Activated CD4-positive, alpha-beta T cell treated with anti-CD3 and anti-CD28 coated beads for 36 hours (primary cell): ENCODE measurements at regions of chr18 and their contacts with region 1.

Region 1: DNA sequence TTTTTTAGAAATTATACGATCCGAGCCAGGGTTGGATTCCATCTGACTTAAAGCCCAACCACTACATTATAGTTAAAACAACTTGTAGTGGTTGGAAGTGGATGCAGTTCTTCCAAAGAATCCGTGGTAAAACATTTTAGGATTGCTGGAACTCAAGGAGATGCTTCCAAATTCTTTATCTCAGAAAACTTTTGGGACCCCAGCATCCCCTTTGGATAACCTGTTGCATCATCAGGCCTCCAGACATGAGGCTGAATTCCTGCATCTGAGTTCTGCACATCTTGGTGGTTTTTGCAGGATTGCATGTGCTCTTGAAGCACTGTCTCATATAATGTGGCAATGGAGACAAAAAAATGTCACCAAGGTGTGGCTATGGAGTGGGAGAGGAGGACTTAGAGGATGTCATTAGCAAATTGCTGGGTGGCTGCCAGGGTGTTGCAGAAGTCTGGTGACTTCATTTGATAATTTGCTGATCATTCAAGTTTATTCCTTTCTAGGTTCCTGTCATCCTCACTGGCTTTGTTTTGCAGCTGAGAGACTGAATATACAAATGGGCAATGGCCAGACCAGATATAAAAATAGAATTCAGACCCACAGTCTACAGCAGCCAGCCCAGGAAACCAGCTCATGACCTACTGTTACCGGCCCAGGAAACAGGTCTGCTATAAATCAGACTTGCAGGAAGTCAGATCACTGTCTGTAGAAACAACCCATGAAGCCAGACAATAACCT is 207.7 kb downstream of the BCL2 start:
- DNase-seq: no peak
- ATAC-seq: no peak
- H3K4me3 Mint-ChIP-seq: no peak overlapping the region
- H3K27ac Mint-ChIP-seq: no peak overlapping the region
- H3K4me1 Mint-ChIP-seq: peaks cover 15% of the 10 kb centered on the region
- H3K27me3 Mint-ChIP-seq: peaks cover 7% of the 10 kb centered on the region

Region 2: DNA sequence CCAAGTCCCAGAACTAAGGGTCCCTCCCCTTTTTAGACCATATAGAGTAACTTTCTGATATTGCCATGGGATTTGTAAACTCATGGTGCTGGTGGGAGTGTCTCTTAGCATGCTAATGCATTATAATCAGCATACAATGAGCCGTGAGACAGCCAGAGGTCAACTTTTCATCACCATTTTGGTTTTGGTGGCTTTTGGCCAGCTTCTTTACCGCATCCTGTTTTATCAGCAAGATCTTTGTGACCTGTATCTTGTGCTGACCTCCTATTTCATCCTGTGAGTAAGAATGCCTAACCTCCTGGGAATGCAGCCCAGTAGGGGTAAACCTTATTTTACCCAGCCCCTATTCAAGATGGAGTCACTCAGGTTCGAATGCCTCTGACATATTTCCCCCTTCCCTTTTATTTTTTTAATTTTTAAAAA is 248.2 kb before region 1 on chr18:
- CTCF ChIA-PET with region 1: no interaction called
- POLR2A ChIA-PET with region 1: no interaction called
- intact Hi-C with region 1: no loop called
- DNase-seq: no peak
- ATAC-seq: no peak
- H3K4me3 Mint-ChIP-seq: no peak overlapping the region
- H3K27ac Mint-ChIP-seq: no peak overlapping the region
- H3K4me1 Mint-ChIP-seq: no peaks in the 10 kb centered on the region
- H3K27me3 Mint-ChIP-seq: no peaks in the 10 kb centered on the region

Region 3: DNA sequence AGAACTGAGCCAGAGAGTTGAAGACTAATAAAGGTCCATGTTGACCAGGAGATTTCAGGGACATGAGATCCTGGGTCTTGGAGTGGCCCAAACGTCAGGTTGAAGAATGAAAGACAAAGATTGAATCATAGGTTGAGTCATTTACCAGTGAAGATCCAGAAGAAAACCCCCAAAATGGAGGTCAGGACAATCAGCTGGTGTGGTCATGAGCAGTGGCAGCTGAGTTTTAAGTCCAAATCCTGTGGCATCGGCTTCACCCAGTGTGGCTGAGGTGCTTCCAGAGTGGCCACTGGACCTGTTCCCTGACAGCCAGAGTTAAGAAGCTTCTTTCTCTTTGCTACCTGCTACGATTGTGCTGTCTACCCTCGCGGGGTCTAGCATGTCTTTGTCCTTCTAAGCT is 26.2 kb before region 1 on chr18:
- CTCF ChIA-PET with region 1: no interaction called
- POLR2A ChIA-PET with region 1: no interaction called
- intact Hi-C with region 1: loop called in 1 of 2 experiments (anchors 2 kb)
- DNase-seq: no peak
- ATAC-seq: peak; percentile 33
- H3K4me3 Mint-ChIP-seq: no peak overlapping the region
- H3K27ac Mint-ChIP-seq: no peak overlapping the region
- H3K4me1 Mint-ChIP-seq: peaks cover 3% of the 10 kb centered on the region
- H3K27me3 Mint-ChIP-seq: no peaks in the 10 kb centered on the region

Region 4: GRCh38 chr18:63154350-63155152 is 42.7 kb after region 1 on chr18:
- CTCF ChIA-PET with region 1: no interaction called
- POLR2A ChIA-PET with region 1: no interaction called
- intact Hi-C with region 1: no loop called
- DNase-seq: no peak
- ATAC-seq: no peak
- H3K4me3 Mint-ChIP-seq: peak overlapping the region; percentile 73
- H3K27ac Mint-ChIP-seq: peak overlapping the region; percentile 95
- H3K4me1 Mint-ChIP-seq: peaks cover 96% of the 10 kb centered on the region
- H3K27me3 Mint-ChIP-seq: no peaks in the 10 kb centered on the region

Region 5: GRCh38 chr18:63267975-63268721 is 156.3 kb after region 1 on chr18:
- CTCF ChIA-PET with region 1: no interaction called
- POLR2A ChIA-PET with region 1: no interaction called
- intact Hi-C with region 1: no loop called
- DNase-seq: no peak
- ATAC-seq: peak; percentile 87
- H3K4me3 Mint-ChIP-seq: no peak overlapping the region
- H3K27ac Mint-ChIP-seq: peak overlapping the region; percentile 56
- H3K4me1 Mint-ChIP-seq: peaks cover 53% of the 10 kb centered on the region
- H3K27me3 Mint-ChIP-seq: no peaks in the 10 kb centered on the region